Ascending aorta (tissue), 2 donors: ENCODE measurements at regions of chr22 and their contacts with region 1.

Region 1: DNA sequence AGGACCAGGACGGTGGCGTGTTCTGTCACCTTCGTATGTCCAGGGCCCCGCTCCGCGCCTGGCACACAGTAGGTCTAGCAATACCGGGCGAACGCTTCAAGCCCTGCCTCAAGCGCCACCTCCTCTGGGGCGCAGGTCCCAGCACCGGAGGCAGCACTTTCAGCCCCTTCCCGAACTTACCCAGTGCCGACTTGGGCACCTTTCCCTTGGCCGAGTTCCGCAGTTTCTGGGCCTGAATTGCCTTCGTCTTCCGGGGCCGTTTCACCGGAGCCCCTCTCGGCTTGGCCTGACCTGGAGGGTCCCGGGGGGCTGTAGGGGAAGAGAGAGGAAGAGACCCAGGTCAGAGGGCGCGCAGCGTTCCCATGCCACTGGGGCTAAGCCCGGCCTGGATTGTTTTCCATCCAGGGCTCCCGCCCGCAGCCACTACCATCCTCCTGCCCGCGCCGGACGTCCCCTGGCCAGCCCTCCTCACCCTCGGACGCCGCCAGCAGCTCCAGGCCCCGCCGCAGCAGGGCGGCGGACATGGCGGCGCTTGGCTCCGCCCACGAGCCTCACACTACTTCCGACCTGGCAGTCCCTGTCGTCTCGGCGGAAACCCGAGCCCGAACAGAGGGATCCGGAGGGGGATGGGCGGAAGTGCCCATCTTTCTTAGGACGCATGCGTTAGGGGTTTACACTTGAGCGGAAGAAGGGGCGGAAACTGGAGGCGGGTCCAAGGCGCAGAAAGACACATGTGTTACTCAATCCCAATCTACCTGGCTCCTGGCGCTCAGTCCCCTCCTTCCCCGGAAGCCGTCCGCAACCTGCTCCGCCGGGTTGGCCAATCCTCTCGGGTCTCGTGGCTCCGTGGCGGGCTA is at the start of gene RPS19BP1:
- DNase-seq: peak; percentile 99 to 100
- H3K4me3 ChIP-seq: peak within 1 kb of the TSS; percentile 89 to 95
- H3K27ac ChIP-seq: peak within 1 kb of the TSS; percentile 85 to 91
- H3K4me1 ChIP-seq: peaks cover 16 to 42% of the 10 kb centered on the region in 2 donors
- H3K27me3 ChIP-seq: no peaks in the 10 kb centered on the region
- CTCF ChIP-seq: peak in 1 of 3 experiments; percentile 9
- total RNA-seq, gene RPS19BP1: 218 TPM

Region 2: DNA sequence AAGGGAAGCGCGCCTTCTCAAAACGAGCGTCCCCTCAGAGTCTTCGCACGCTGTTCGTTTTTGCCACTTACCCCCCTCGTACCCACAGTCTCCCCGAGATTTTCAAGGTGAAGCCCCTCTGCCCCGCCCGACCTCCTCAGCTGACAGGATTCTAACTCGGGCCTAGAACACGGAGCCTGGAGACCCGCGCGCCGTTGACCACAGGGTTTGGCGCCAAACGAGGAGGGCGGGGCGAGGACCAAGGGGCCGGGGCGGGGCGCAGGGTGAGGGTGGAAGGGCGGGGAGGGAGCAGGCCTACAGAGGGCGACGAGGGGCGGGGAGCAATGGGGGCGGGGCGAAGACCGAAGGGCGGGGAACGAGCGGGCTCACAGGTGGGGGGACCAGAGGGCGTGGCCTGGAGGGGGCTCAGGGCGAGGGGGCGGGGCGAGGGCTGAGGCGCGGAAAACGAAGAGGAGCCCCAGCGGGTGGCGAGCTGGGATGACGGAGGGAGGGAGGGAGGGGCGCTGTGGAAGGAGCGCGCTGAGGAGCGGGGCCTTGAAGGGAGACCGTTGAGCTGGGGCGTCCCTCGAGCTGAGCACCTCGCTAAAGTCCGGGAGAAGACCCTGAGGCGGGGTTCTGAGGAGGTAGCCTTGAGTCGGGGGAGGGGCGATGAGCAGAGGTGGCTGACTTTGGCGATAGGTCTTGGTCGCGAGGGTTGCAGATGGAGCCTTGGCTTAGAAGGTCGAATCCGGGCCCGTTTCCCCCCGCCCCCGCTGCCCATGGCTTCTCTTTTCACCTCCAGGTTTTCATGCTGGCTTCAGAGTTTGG is 962.3 kb before region 1 on chr22 and contains the start of gene DMC1:
- intact Hi-C with region 1: loop called (anchors 5 kb)
- DNase-seq: peak; percentile 52 to 96
- H3K4me3 ChIP-seq: peak within 1 kb of the TSS; percentile 67 to 80
- H3K27ac ChIP-seq: peak within 1 kb of the TSS; percentile 91 to 95
- H3K4me1 ChIP-seq: peaks cover 4 to 35% of the 10 kb centered on the region in 2 donors
- H3K27me3 ChIP-seq: no peaks in the 10 kb centered on the region
- CTCF ChIP-seq: no peak
- total RNA-seq, gene DMC1: not detected

Region 3: GRCh38 chr22:39349967-39350726 is 182.3 kb before region 1 on chr22 and contains the start of gene SYNGR1:
- intact Hi-C with region 1: loop called (anchors 5 kb)
- DNase-seq: no peak
- H3K4me3 ChIP-seq: peak within 1 kb of the TSS; percentile 72 to 96
- H3K27ac ChIP-seq: peak within 1 kb of the TSS in 1 of 2 donors; percentile 63
- H3K4me1 ChIP-seq: peaks cover 0 to 2% of the 10 kb centered on the region in 2 donors
- H3K27me3 ChIP-seq: no peaks in the 10 kb centered on the region
- CTCF ChIP-seq: no peak
- total RNA-seq, gene SYNGR1: 2.2 TPM

Region 4: GRCh38 chr22:39520054-39520891 is 12.2 kb before region 1 on chr22 and contains the start of gene ATF4:
- intact Hi-C with region 1: loop called (anchors 1 kb)
- DNase-seq: peak; percentile 95 to 99
- H3K4me3 ChIP-seq: peak within 1 kb of the TSS; percentile 92 to 100
- H3K27ac ChIP-seq: peak within 1 kb of the TSS; percentile 100
- H3K4me1 ChIP-seq: peaks cover 27 to 36% of the 10 kb centered on the region in 2 donors
- H3K27me3 ChIP-seq: no peaks in the 10 kb centered on the region
- CTCF ChIP-seq: peak in 1 of 3 experiments; percentile 3
- total RNA-seq, gene ATF4: 173 TPM

Region 5: DNA sequence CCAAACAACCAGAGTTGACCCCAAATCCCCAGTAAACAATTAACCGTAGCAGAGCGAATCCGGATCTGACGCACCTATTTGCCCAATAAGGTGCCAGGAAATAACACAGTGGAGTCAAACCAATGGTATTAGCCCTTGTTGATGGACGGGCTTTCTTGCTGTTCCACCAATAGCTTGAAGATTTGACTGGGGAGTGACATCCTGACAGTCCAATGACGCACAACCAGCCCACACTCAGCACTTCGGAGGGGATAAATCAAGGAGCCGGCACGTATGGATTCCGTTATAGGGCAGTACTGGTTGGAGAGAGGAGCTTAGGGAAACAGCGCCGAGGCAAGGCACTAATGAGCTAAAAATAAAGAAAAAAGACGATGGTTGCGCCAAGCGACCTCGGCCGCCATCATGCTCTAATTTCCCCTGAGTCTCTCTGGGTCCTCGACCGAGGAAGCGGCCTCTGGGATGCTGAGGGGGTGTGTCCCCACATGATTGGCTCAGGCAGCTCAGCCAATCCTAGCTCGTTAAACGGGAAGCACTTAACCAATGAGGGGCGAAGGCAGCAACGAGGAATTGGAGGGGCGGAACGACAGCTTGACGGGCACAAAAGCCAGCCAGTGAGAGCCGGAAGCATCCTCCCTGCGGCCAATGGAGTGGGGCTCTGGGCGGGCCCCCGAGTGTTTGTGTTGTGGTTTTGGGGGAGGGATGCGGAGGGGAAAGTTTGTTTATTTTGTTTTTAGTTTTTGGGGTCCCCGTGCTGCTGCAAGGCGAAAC is 511.8 kb after region 1 on chr22:
- intact Hi-C with region 1: loop called (anchors 2 kb)
- DNase-seq: peak; percentile 97 to 99
- H3K4me3 ChIP-seq: peak overlapping the region; percentile 91 to 96
- H3K27ac ChIP-seq: peak overlapping the region; percentile 85 to 93
- H3K4me1 ChIP-seq: peaks cover 0 to 8% of the 10 kb centered on the region in 2 donors
- H3K27me3 ChIP-seq: no peaks in the 10 kb centered on the region
- CTCF ChIP-seq: no peak

Region 6: DNA sequence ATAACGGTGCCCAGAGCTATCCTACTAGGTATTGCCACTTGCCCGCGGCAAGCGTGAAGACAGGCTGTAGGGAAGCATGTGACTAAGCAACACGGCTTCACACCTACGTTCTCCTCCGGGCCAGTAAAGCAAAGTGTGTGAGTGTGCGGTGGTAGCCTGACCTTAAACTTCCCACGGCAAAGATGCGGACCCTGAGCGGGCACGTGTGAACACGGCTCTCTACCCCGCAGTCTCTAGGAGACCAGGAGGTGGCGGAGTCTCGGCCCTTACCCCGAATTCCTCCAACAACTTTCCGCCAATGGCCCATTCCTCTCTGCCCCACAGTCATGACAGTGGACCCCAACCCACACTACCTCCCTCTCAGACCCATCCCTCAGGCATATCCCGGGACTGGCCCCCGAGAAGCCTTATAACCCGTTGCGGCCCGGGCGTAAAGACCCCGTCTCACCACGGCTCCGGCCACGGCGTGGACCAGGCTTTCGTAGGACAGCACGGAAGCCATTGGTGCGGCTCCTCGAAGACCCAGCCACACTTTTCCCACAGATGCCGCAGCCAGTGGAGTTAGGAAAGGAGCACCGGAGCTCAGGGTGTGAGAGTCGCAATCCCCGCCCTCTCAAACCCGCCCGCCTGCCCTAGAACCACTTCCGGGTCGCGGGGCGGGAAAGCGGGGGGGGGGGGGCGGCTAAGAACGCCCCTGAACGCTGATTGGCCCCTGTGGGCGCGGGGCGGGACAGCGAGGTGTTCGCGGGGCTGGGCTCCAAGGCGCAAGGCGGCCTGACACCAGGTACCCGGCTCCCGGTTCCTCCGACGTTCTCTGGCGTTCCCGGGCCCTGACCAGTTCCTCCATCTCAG is 1286.5 kb after region 1 on chr22 and contains the start of gene SLC25A17:
- intact Hi-C with region 1: loop called (anchors 5 kb)
- DNase-seq: peak; percentile 32 to 92
- H3K4me3 ChIP-seq: peak within 1 kb of the TSS; percentile 82 to 90
- H3K27ac ChIP-seq: peak within 1 kb of the TSS; percentile 74 to 78
- H3K4me1 ChIP-seq: peaks cover 0 to 13% of the 10 kb centered on the region in 2 donors
- H3K27me3 ChIP-seq: no peaks in the 10 kb centered on the region
- CTCF ChIP-seq: peak in 2 of 3 experiments; percentile 23 to 51
- total RNA-seq, gene SLC25A17: 62.1 TPM